Activated CD4-positive, alpha-beta T cell treated with anti-CD3 and anti-CD28 coated beads, Interleukin-2, amount 10 ng/mL, durations not matched to agents 7 days and 5 days (primary cell): ENCODE measurements at regions of chr20 and their contacts with region 1.

Region 1: GRCh38 chr20:36605399-36606157 is at the start of gene RAB5IF:
- DNase-seq: peak; percentile 99
- H3K4me3 Mint-ChIP-seq: peak within 1 kb of the TSS; percentile 95
- H3K27ac Mint-ChIP-seq: peak within 1 kb of the TSS; percentile 92
- H3K4me1 Mint-ChIP-seq: peaks cover 32% of the 10 kb centered on the region
- H3K27me3 Mint-ChIP-seq: no peaks in the 10 kb centered on the region
- total RNA-seq, gene RAB5IF: 87.9 to 97.0 TPM

Region 2: DNA sequence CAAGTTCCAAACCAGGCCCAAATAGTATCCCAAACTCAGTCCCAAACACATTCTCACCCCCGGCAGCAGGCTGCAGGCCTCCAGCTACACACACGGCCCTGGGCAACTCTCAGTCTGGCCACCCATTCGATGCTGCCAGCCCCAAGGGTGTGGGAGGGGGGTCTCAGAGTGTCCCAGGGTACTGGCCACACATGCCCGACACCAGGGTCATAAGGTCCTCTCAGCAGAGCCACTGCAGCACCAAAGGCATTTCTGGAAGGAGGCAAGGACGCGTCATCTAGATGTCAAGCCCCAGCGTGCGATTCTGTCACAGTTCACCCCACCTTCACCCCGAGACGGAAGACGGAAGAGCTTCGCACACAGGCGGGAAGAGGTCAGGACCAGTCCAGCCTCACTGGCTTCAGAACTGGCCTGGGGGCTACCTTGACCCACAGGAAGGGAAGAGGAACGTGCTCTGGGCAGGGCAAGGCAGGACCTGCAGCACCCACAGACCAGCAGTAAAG is 54.7 kb before region 1 on chr20:
- CTCF ChIA-PET with region 1: interaction called, 4 read pairs
- POLR2A ChIA-PET with region 1: interaction called, 12 read pairs
- DNase-seq: no peak
- H3K4me3 Mint-ChIP-seq: no peak overlapping the region
- H3K27ac Mint-ChIP-seq: no peak overlapping the region
- H3K4me1 Mint-ChIP-seq: no peaks in the 10 kb centered on the region
- H3K27me3 Mint-ChIP-seq: no peaks in the 10 kb centered on the region

Region 3: DNA sequence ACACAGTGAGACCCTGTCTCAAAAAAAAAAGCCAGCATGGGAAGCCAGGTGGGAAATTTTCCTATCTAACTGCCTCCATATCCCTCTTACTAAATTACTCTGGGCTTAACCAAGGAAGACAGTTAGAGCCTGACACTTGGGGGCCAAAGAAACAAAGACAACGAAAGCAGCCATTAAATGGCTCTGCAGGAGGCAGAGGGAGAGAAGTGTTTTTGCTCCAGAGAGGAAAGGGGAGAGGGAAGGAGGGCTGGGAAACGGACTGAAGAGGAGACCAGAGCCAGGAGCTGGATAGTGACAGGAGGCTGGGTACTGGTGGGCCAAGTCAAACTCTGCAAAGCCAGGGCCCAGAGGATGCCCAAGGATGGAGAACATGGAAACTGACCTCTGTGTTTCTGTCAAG is 42.9 kb before region 1 on chr20:
- CTCF ChIA-PET with region 1: interaction called, 15 read pairs
- POLR2A ChIA-PET with region 1: no interaction called
- DNase-seq: no peak
- H3K4me3 Mint-ChIP-seq: no peak overlapping the region
- H3K27ac Mint-ChIP-seq: no peak overlapping the region
- H3K4me1 Mint-ChIP-seq: peaks cover 3% of the 10 kb centered on the region
- H3K27me3 Mint-ChIP-seq: no peaks in the 10 kb centered on the region

Region 4: DNA sequence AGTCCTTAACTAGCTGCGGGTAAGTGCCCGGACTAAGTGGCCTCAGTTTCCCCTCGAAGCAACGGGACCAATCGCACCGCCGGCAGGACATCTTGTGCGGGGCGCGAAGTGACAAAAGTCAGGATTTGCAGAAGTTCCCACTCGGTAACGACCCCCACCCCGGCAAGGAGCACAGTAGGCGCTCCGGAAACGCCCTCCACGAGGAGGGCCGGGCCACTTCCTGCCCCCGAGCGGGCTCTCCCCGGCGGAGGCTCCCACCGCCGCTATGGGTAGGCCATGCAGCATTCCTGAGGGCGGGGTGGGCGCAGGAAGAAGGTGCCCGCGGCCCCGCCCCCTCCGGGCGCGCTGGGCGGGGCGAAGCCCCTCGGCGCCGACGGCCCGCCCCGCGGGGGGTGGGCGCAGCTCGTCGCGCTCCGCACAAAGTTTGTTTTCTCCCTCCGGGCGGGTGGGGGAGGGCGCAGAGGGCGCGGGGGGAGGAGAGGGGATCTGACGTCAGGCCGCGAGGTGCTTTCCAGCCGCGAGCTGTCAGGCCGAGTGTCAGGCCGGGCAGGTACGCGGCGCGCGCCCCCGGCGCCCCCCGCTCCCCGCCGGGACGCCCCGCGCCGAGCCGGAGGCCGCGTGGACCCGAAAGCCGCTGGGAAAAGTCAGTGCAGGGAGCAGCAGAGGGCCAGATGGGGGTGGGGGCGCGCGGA is 32.3 kb before region 1 on chr20 and contains the start of gene TGIF2:
- CTCF ChIA-PET with region 1: interaction called, 20 read pairs
- POLR2A ChIA-PET with region 1: interaction called, 4 read pairs
- DNase-seq: peak; percentile 84
- H3K4me3 Mint-ChIP-seq: peak within 1 kb of the TSS; percentile 83
- H3K27ac Mint-ChIP-seq: peak within 1 kb of the TSS; percentile 97
- H3K4me1 Mint-ChIP-seq: peaks cover 39% of the 10 kb centered on the region
- H3K27me3 Mint-ChIP-seq: no peaks in the 10 kb centered on the region
- total RNA-seq, gene TGIF2: 24.1 to 26.0 TPM

Region 5: GRCh38 chr20:36591854-36592641 is 13.5 kb before region 1 on chr20:
- CTCF ChIA-PET with region 1: interaction called, 40 read pairs
- POLR2A ChIA-PET with region 1: interaction called, 4 read pairs
- DNase-seq: peak; percentile 49
- H3K4me3 Mint-ChIP-seq: peak overlapping the region; percentile 61
- H3K27ac Mint-ChIP-seq: peak overlapping the region; percentile 89
- H3K4me1 Mint-ChIP-seq: peaks cover 67% of the 10 kb centered on the region
- H3K27me3 Mint-ChIP-seq: no peaks in the 10 kb centered on the region

Region 6: DNA sequence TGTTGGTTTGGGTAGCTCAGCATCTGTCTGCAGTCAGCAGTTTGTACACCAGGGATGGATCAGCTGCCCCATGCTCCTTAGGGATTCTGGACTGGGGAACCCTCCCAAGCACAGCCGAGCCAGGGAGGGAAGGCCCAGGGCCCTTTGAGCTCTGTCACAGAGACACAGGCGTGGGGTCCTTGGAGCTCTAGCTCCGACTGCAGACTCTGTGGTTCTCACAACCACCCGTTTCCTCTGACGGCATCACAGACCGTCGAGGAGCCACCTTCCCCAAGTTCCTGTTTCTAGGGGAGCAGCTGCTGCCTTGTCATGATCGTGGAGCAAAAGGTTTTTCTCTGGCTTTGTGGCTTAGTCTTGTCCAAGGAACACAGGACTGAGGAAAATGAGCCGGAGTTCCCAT is 40.4 kb after region 1 on chr20 and contains the start of gene SLA2:
- CTCF ChIA-PET with region 1: interaction called, 16 read pairs
- POLR2A ChIA-PET with region 1: interaction called, 4 read pairs
- DNase-seq: peak; percentile 80
- H3K4me3 Mint-ChIP-seq: peak within 1 kb of the TSS; percentile 97
- H3K27ac Mint-ChIP-seq: peak within 1 kb of the TSS; percentile 95
- H3K4me1 Mint-ChIP-seq: peaks cover 55% of the 10 kb centered on the region
- H3K27me3 Mint-ChIP-seq: no peaks in the 10 kb centered on the region
- total RNA-seq, gene SLA2: 87.3 to 92.7 TPM